ENCODE measurements at regions of chr3 and their contacts with region 1.

Region 1: GRCh38 chr3:150183678-150184425 is 213.2 kb upstream of the PFN2 start:
- DNase-seq: peak; percentile 65 to 82 (median 69)
- H3K4me3 ChIP-seq: peak overlapping the region in 1 of 4 donors; percentile 51
- H3K27ac ChIP-seq: no peak overlapping the region
- H3K4me1 ChIP-seq: peaks cover 0 to 11% of the 10 kb centered on the region in 2 donors
- H3K27me3 ChIP-seq: no peaks in the 10 kb centered on the region
- CTCF ChIP-seq: peak; percentile 10 to 68 (median 50)
- POLR2A ChIP-seq: no peak

Region 2: DNA sequence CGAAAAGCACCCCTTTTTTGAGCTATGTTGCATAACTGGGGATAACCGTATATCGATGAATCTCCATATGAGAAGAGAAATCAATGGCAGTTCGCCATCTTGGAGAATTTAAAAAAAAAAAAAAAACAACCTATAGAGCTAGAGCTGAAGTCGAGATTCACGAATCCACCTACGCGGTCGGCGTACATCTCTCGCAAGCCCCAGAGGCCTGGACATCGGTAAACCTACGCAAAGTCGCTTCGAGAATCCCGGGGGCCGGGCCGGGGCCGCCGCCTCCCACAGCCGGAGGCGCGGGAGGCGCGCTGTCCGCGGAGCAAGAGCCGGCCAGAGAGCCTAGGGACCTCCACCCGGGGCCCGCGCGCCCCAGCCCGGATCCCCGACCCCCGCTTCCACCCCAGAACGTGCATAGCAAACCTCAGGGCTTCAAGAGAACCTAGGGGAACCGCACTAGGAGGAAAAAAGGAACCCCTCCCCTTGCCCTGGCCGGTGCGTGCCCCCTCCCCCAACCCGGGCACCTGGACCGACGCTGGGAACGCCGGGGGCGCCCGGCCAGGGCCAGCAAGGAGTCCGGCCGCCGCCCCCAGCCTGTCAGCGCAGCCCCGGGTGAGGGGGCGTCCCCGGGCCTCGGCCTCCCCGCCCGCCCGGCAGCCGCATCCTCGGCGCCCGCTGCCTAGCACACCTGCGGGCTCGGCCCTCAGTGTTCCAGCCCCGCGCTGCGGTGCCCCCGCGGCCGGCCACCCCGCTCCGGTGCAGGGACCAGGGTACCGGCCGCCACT is 213.7 kb before region 1 on chr3:
- intact Hi-C with region 1: loop called (anchors 5 to 10 kb)
- DNase-seq: peak; percentile 81 to 91 (median 86)
- H3K4me3 ChIP-seq: peak overlapping the region; percentile 45 to 94 (median 68)
- H3K27ac ChIP-seq: peak overlapping the region in 4 of 5 donors; percentile 65 to 94 (median 84)
- H3K4me1 ChIP-seq: peaks cover 6 to 30% of the 10 kb centered on the region in 2 donors
- H3K27me3 ChIP-seq: no peaks in the 10 kb centered on the region
- CTCF ChIP-seq: no peak
- POLR2A ChIP-seq: peak; percentile 16 to 17

Region 3: GRCh38 chr3:150238998-150239619 is 55.3 kb after region 1 on chr3:
- intact Hi-C with region 1: no loop called
- DNase-seq: no peak
- H3K4me3 ChIP-seq: no peak overlapping the region
- H3K27ac ChIP-seq: no peak overlapping the region
- H3K4me1 ChIP-seq: peaks cover 23 to 26% of the 10 kb centered on the region in 2 donors
- H3K27me3 ChIP-seq: no peaks in the 10 kb centered on the region
- CTCF ChIP-seq: no peak
- POLR2A ChIP-seq: no peak

Measured in adrenal gland (tissue), 19 donors.